Activated naive CD4-positive, alpha-beta T cell treated with anti-CD3 and anti-CD28 coated beads, Interleukin-2, amount 10 ng/mL, durations not matched to agents 7 days and 5 days (primary cell): ENCODE measurements at regions of chr6 and their contacts with region 1.

Region 1: GRCh38 chr6:25027221-25027916 is 91.6 kb upstream of the RIPOR2 start:
- DNase-seq: peak; percentile 88
- H3K4me3 Mint-ChIP-seq: peak overlapping the region; percentile 62
- H3K27ac Mint-ChIP-seq: peak overlapping the region; percentile 92
- H3K4me1 Mint-ChIP-seq: peaks cover 53% of the 10 kb centered on the region
- H3K27me3 Mint-ChIP-seq: no peaks in the 10 kb centered on the region

Region 2: GRCh38 chr6:24855395-24856245 is 171.7 kb before region 1 on chr6:
- CTCF ChIA-PET with region 1: interaction called, 29 read pairs
- DNase-seq: peak; percentile 75
- H3K4me3 Mint-ChIP-seq: no peak overlapping the region
- H3K27ac Mint-ChIP-seq: peak overlapping the region; percentile 97
- H3K4me1 Mint-ChIP-seq: peaks cover 52% of the 10 kb centered on the region
- H3K27me3 Mint-ChIP-seq: no peaks in the 10 kb centered on the region

Region 3: DNA sequence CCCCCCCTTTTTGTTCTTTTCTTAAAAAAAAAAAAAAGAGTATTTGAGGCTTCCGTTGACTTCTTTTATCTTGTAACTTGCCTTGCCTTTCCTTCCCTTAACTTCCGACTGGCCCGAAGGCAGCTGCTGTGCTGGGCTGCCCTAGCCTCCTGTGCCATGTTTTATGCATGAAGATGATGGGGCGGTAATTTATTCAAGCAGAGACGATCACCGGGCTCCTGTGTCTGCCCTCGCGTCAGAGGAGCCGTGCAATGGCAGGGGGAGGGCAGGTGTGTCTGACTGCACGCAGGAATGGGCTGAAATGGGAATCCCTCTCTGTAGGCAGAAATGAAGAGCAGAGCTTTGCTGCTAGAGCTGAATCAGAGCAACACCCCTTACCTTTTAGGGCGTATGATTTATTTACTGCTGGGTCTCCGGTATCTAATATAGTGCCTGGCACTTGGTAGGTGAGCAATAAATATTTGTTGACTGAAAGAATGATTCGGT is 14.7 kb after region 1 on chr6:
- CTCF ChIA-PET with region 1: interaction called, 95 read pairs
- DNase-seq: peak; percentile 67
- H3K4me3 Mint-ChIP-seq: peak overlapping the region; percentile 93
- H3K27ac Mint-ChIP-seq: peak overlapping the region; percentile 95
- H3K4me1 Mint-ChIP-seq: peaks cover 62% of the 10 kb centered on the region
- H3K27me3 Mint-ChIP-seq: peaks cover 5% of the 10 kb centered on the region

Region 4: GRCh38 chr6:25061289-25061936 is 34.0 kb after region 1 on chr6:
- CTCF ChIA-PET with region 1: interaction called, 69 read pairs
- DNase-seq: no peak
- H3K4me3 Mint-ChIP-seq: no peak overlapping the region
- H3K27ac Mint-ChIP-seq: no peak overlapping the region
- H3K4me1 Mint-ChIP-seq: peaks cover 30% of the 10 kb centered on the region
- H3K27me3 Mint-ChIP-seq: no peaks in the 10 kb centered on the region

Region 5: GRCh38 chr6:25088513-25088912 is 61.1 kb after region 1 on chr6:
- CTCF ChIA-PET with region 1: interaction called, 16 read pairs
- DNase-seq: no peak
- H3K4me3 Mint-ChIP-seq: no peak overlapping the region
- H3K27ac Mint-ChIP-seq: no peak overlapping the region
- H3K4me1 Mint-ChIP-seq: peaks cover 21% of the 10 kb centered on the region
- H3K27me3 Mint-ChIP-seq: no peaks in the 10 kb centered on the region